Gastrocnemius medialis (tissue), 4 donors: ENCODE measurements at regions of chr2 and their contacts with region 1.

Region 1: DNA sequence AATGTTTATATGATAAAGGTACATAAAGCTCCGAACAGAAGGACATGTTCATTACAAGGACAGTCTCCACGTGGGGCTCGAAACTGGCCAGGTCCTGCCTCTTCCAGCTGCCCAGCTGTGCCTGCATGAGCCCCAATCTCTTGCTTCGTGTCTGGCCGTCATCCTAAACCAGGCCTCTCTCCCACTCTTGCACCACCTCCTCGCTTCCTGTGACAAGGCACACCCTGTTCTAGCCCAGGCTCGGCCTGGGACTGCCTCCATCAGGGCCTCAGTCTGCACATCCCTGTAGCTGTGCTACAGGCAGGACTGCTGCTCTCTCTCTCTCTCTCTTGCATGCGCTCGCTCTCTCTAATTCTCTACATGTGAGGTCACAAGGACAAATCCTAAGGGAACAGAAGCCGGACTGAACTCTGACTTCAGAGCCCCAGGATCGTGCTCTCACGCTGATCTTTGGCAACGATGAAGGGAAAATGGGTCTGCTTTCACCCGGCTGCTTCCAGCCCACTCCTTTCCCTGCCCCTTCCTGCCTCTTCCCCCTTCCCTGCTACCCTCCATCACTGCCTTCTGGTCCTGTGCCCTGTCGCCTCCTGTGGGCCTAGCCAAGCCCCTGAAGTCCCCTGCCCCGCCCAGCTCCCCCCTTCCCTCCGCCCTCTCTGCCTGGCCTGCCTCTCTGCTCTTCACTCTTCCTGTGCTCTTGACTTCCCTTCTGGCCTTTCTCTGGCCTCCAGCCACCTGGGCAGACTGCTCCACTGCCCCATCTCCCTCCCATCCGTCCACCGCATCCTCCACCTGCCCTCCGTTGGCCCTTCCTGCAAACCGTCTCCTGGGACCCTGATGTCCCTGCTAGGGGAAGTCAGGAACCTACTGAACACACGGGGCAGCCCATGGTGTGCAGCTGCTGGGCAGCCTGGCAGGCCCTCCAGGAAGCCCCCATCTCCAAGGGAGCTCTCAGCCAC is 7.8 kb upstream of the GPR55 start:
- DNase-seq: peak; percentile 32 to 53
- ATAC-seq: peak; percentile 62 to 76
- H3K4me3 ChIP-seq: no peak overlapping the region
- H3K27ac ChIP-seq: peak overlapping the region in 2 of 4 donors; percentile 37 to 38
- H3K4me1 ChIP-seq: no peaks in the 10 kb centered on the region
- H3K27me3 ChIP-seq: peaks cover 0 to 18% (median 0%) of the 10 kb centered on the region in 3 donors
- CTCF ChIP-seq: no peak
- POLR2A ChIP-seq: no peak

Region 2: DNA sequence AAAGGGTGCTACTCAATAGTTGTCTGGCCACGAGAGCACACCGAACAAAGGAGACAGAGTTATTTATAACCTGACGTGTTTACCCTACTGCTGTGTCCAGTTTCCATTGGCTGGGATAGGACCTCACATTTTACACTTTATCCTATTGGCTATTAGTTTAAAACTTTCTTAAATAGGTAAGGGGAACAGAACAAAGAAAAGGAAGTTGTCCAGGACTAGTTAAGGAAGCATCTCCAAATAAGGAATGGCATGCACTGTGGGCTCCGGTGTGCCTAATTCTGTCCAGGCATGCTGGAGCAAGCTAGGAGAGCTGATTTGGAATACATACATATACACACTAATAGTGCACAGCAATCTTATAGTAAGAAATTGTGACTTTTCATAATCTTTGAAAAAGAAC is 148.0 kb before region 1 on chr2:
- in situ Hi-C with region 1: no loop called
- intact Hi-C with region 1: no loop called
- DNase-seq: no peak
- ATAC-seq: no peak
- H3K4me3 ChIP-seq: no peak overlapping the region
- H3K27ac ChIP-seq: peak overlapping the region; percentile 29 to 84 (median 49)
- H3K4me1 ChIP-seq: peaks cover 42 to 60% of the 10 kb centered on the region in 2 donors
- H3K27me3 ChIP-seq: no peaks in the 10 kb centered on the region
- CTCF ChIP-seq: no peak
- POLR2A ChIP-seq: no peak

Region 3: DNA sequence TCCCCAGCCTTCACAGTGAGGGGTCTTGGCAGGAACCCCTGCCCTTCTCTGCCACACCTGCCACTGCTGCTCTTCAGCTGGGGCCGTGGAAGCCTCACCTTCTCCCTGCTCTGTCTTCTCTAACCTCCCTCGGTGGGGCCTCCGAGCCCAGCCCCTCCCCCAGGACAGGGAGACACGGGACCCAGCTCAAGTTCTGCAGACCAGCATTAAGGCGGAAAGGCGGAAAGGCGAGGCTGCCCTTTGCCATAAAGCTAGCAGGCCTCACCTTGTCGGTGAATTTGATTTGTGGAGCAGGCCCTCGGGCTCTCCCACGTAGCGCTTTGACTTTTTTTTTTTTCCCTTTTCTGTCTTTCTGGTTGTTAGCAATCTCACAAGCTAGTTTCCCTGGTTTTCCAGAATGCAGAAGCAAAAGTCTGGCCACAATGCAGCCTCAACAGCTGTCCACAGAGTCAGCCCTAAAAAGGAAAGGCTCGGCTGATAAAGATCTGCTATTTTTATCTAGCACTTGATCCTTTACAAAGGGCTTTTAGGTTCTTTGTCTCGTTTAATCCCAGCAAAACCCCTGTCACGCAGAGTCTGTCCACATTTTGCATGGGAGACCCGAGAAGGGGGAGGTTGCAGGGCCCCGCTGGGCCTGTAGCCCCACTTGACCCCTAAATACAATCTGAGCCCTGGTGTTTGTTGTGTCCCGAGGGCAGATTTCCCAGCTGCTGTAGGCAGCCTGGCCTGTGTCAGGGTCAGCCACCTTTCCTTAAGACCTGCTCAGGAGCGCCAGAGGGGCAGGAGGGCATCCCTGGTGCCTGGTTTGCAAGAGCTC is 62.1 kb before region 1 on chr2:
- in situ Hi-C with region 1: no loop called
- intact Hi-C with region 1: loop called (anchors 2 kb)
- DNase-seq: no peak
- ATAC-seq: no peak
- H3K4me3 ChIP-seq: no peak overlapping the region
- H3K27ac ChIP-seq: peak overlapping the region in 3 of 4 donors; percentile 34 to 44 (median 41)
- H3K4me1 ChIP-seq: peaks cover 8 to 9% of the 10 kb centered on the region in 2 donors
- H3K27me3 ChIP-seq: peaks cover 0 to 7% (median 0%) of the 10 kb centered on the region in 3 donors
- CTCF ChIP-seq: no peak
- POLR2A ChIP-seq: no peak

Region 4: DNA sequence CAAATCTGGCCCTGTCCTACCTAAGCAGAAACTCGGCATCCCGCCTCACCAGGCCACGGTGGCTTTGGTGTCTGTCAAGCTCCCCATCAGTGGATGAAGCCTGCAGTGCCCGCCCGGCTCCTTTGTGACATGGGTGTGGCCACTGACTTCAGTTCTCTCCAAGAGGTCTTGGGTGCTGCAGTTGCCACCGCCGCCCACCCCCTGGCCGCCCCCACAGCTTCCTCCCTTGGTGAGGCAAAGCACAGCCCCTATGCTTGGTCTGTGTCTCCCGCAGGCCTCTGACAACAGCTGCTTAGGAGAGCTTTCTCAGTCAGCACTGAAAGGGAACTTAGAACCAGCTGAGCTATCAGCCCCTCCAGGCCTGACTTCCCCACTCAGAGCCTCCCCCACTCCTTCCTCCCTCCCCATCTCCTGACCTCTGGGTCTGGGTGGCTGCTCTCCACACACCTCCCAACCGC is 15.1 kb after region 1 on chr2:
- in situ Hi-C with region 1: no loop called
- intact Hi-C with region 1: no loop called
- DNase-seq: no peak
- ATAC-seq: no peak
- H3K4me3 ChIP-seq: no peak overlapping the region
- H3K27ac ChIP-seq: no peak overlapping the region
- H3K4me1 ChIP-seq: no peaks in the 10 kb centered on the region
- H3K27me3 ChIP-seq: no peaks in the 10 kb centered on the region
- CTCF ChIP-seq: no peak
- POLR2A ChIP-seq: no peak